ENCODE measurements at regions of chr1 and their contacts with region 1.

Region 1: DNA sequence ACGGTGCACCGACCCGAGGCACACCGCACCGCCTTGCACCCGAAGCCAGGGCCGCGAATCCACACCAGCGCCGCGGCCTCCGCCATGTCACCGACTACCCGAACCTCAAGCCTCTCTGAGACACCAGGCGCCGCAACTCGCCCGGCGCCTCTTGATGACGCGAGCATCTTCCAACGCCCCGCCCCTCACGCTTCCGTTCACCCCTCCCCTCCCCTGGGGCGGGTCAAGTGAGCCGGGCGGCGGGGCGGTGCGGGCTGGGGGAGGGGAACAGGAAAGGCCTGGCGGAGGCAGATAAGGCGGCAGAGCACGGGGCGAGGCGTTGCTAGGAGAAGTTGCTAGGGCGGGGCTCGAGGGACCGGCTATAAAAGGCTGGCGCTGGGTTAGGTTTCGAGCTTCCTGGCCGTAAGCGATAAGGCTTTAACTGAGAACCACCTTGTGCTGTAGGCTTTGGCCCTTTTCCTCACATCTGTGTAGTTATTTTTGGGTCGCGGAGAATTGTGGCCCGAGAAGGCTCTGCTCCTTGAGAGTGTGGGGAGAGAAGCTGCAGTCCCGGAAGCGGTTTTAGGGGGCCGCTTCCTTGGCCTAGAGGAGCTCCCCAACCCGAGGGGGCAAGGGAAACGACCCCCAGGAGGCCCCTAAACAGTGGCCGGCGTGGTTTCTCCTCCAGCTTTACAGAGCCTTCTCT is at the start of gene SDE2:
- DNase-seq: peak; percentile 98 to 100 (median 100)
- ATAC-seq: peak; percentile 93
- H3K4me3 ChIP-seq: peak within 1 kb of the TSS; percentile 84
- H3K4me3 Mint-ChIP-seq: peak within 1 kb of the TSS; percentile 89 to 100 (median 100)
- H3K27ac ChIP-seq: peak within 1 kb of the TSS; percentile 98
- H3K27ac Mint-ChIP-seq: peak within 1 kb of the TSS; percentile 95 to 100 (median 100)
- H3K4me1 ChIP-seq: peaks cover 51 to 71% of the 10 kb centered on the region in 2 donors
- H3K4me1 Mint-ChIP-seq: peaks cover 47 to 96% (median 79%) of the 10 kb centered on the region in 7 donors
- H3K27me3 ChIP-seq: no peaks in the 10 kb centered on the region
- H3K27me3 Mint-ChIP-seq: no peaks in the 10 kb centered on the region
- total RNA-seq, gene SDE2: 20.4 to 36.3 (median 20.8) TPM

Region 2: GRCh38 chr1:224623743-224624333 is 1375.5 kb before region 1 on chr1:
- CTCF ChIA-PET with region 1: no interaction called
- POLR2A ChIA-PET with region 1: no interaction called
- intact Hi-C with region 1: loop called in 1 of 2 experiments (anchors 10 kb)
- DNase-seq: peak in 8 of 9 donors; percentile 70 to 89 (median 83)
- ATAC-seq: peak; percentile 93
- H3K4me3 ChIP-seq: peak overlapping the region; percentile 40
- H3K4me3 Mint-ChIP-seq: peak overlapping the region; percentile 58 to 80 (median 72)
- H3K27ac ChIP-seq: no peak overlapping the region
- H3K27ac Mint-ChIP-seq: peak overlapping the region; percentile 66 to 95 (median 90)
- H3K4me1 ChIP-seq: peaks cover 18 to 25% of the 10 kb centered on the region in 2 donors
- H3K4me1 Mint-ChIP-seq: peaks cover 22 to 47% (median 31%) of the 10 kb centered on the region in 7 donors
- H3K27me3 ChIP-seq: no peaks in the 10 kb centered on the region
- H3K27me3 Mint-ChIP-seq: peaks cover 40 to 45% (median 44%) of the 10 kb centered on the region in 5 donors

Region 3: GRCh38 chr1:225228841-225229303 is 770.5 kb before region 1 on chr1:
- CTCF ChIA-PET with region 1: no interaction called
- POLR2A ChIA-PET with region 1: no interaction called
- intact Hi-C with region 1: no loop called
- DNase-seq: no peak
- ATAC-seq: no peak
- H3K4me3 ChIP-seq: no peak overlapping the region
- H3K4me3 Mint-ChIP-seq: no peak overlapping the region
- H3K27ac ChIP-seq: no peak overlapping the region
- H3K27ac Mint-ChIP-seq: no peak overlapping the region
- H3K4me1 ChIP-seq: no peaks in the 10 kb centered on the region
- H3K4me1 Mint-ChIP-seq: no peaks in the 10 kb centered on the region
- H3K27me3 ChIP-seq: no peaks in the 10 kb centered on the region
- H3K27me3 Mint-ChIP-seq: peaks cover 0 to 9% (median 0%) of the 10 kb centered on the region in 5 donors

Region 4: GRCh38 chr1:225467193-225468020 is 532.0 kb before region 1 on chr1:
- CTCF ChIA-PET with region 1: no interaction called
- POLR2A ChIA-PET with region 1: interaction called, 41 read pairs
- intact Hi-C with region 1: loop called (anchors 1 kb)
- DNase-seq: peak; percentile 57 to 85 (median 81)
- ATAC-seq: peak; percentile 91
- H3K4me3 ChIP-seq: peak overlapping the region; percentile 94
- H3K4me3 Mint-ChIP-seq: peak overlapping the region; percentile 81 to 94 (median 92)
- H3K27ac ChIP-seq: peak overlapping the region; percentile 85
- H3K27ac Mint-ChIP-seq: peak overlapping the region; percentile 89 to 98 (median 98)
- H3K4me1 ChIP-seq: peaks cover 22 to 40% of the 10 kb centered on the region in 2 donors
- H3K4me1 Mint-ChIP-seq: peaks cover 33 to 65% (median 48%) of the 10 kb centered on the region in 7 donors
- H3K27me3 ChIP-seq: no peaks in the 10 kb centered on the region
- H3K27me3 Mint-ChIP-seq: no peaks in the 10 kb centered on the region

Region 5: GRCh38 chr1:225923692-225924555 is 75.4 kb before region 1 on chr1 and contains the start of gene PYCR2:
- CTCF ChIA-PET with region 1: no interaction called
- POLR2A ChIA-PET with region 1: interaction called, 15 read pairs
- intact Hi-C with region 1: loop called (anchors 1 kb)
- DNase-seq: peak; percentile 92 to 97 (median 94)
- ATAC-seq: peak; percentile 99
- H3K4me3 ChIP-seq: peak within 1 kb of the TSS; percentile 100
- H3K4me3 Mint-ChIP-seq: peak within 1 kb of the TSS; percentile 86 to 98 (median 94)
- H3K27ac ChIP-seq: peak within 1 kb of the TSS; percentile 95
- H3K27ac Mint-ChIP-seq: peak within 1 kb of the TSS; percentile 90 to 98 (median 95)
- H3K4me1 ChIP-seq: peaks cover 11 to 65% of the 10 kb centered on the region in 2 donors
- H3K4me1 Mint-ChIP-seq: peaks cover 45 to 75% (median 60%) of the 10 kb centered on the region in 7 donors
- H3K27me3 ChIP-seq: no peaks in the 10 kb centered on the region
- H3K27me3 Mint-ChIP-seq: no peaks in the 10 kb centered on the region
- total RNA-seq, gene PYCR2: 46.4 to 137 (median 109) TPM

Region 6: GRCh38 chr1:225950905-225951497 is 48.4 kb before region 1 on chr1:
- CTCF ChIA-PET with region 1: no interaction called
- POLR2A ChIA-PET with region 1: no interaction called
- intact Hi-C with region 1: no loop called
- DNase-seq: no peak
- ATAC-seq: no peak
- H3K4me3 ChIP-seq: no peak overlapping the region
- H3K4me3 Mint-ChIP-seq: no peak overlapping the region
- H3K27ac ChIP-seq: no peak overlapping the region
- H3K27ac Mint-ChIP-seq: no peak overlapping the region
- H3K4me1 ChIP-seq: no peaks in the 10 kb centered on the region
- H3K4me1 Mint-ChIP-seq: no peaks in the 10 kb centered on the region
- H3K27me3 ChIP-seq: no peaks in the 10 kb centered on the region
- H3K27me3 Mint-ChIP-seq: peaks cover 4 to 49% (median 8%) of the 10 kb centered on the region in 5 donors

Region 7: DNA sequence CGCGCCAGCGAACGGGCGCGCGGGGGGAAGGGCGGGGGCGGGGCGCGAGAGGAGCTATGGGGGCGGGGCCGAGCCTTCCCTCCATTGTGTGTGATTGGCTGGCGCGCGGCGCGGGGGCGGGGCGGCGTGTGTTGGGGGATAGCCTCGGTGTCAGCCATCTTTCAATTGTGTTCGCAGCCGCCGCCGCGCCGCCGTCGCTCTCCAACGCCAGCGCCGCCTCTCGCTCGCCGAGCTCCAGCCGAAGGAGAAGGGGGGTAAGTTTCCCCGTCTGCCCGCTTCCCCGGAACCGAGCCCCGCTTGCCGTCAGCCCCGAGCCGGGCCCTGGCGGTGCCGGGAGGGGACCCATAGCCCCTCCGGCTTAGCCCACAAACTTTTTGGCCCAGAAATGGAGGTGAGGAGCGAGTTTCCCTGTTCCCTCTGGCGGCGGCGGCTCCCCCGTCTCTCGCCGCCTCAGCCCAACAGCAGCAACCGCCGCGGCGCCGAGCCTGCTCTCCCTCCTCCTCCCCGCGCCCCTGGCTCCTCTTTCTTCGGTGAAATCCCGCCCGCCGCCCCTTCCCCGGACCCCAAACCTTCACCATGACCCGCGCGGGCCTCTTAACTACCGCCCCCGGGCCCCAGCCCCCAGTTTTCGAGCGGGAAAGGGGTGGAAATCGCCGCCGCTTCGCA is 63.3 kb after region 1 on chr1 and contains the start of gene H3-3A:
- CTCF ChIA-PET with region 1: interaction called, 13 read pairs
- POLR2A ChIA-PET with region 1: interaction called, 450 read pairs
- intact Hi-C with region 1: loop called (anchors 1 kb)
- DNase-seq: peak; percentile 97 to 99 (median 98)
- ATAC-seq: peak; percentile 93
- H3K4me3 ChIP-seq: peak within 1 kb of the TSS; percentile 80
- H3K4me3 Mint-ChIP-seq: peak within 1 kb of the TSS; percentile 99 to 100 (median 100)
- H3K27ac ChIP-seq: peak within 1 kb of the TSS; percentile 97
- H3K27ac Mint-ChIP-seq: peak within 1 kb of the TSS; percentile 99 to 100 (median 100)
- H3K4me1 ChIP-seq: peaks cover 24 to 31% of the 10 kb centered on the region in 2 donors
- H3K4me1 Mint-ChIP-seq: peaks cover 34 to 63% (median 51%) of the 10 kb centered on the region in 7 donors
- H3K27me3 ChIP-seq: no peaks in the 10 kb centered on the region
- H3K27me3 Mint-ChIP-seq: no peaks in the 10 kb centered on the region
- total RNA-seq, gene H3-3A: 388 to 561 (median 412) TPM

Region 8: GRCh38 chr1:226121587-226122400 is 122.4 kb after region 1 on chr1:
- CTCF ChIA-PET with region 1: interaction called, 3 read pairs
- POLR2A ChIA-PET with region 1: interaction called, 27 read pairs
- intact Hi-C with region 1: loop called (anchors 1 kb)
- DNase-seq: peak; percentile 65 to 87 (median 77)
- ATAC-seq: peak; percentile 82
- H3K4me3 ChIP-seq: peak overlapping the region; percentile 28
- H3K4me3 Mint-ChIP-seq: peak overlapping the region; percentile 68 to 94 (median 82)
- H3K27ac ChIP-seq: peak overlapping the region; percentile 75
- H3K27ac Mint-ChIP-seq: peak overlapping the region in 4 of 9 donors; percentile 51 to 95 (median 77)
- H3K4me1 ChIP-seq: peaks cover 9 to 12% of the 10 kb centered on the region in 2 donors
- H3K4me1 Mint-ChIP-seq: peaks cover 15 to 40% (median 27%) of the 10 kb centered on the region in 7 donors
- H3K27me3 ChIP-seq: no peaks in the 10 kb centered on the region
- H3K27me3 Mint-ChIP-seq: peaks cover 0 to 10% (median 0%) of the 10 kb centered on the region in 5 donors

Region 9: DNA sequence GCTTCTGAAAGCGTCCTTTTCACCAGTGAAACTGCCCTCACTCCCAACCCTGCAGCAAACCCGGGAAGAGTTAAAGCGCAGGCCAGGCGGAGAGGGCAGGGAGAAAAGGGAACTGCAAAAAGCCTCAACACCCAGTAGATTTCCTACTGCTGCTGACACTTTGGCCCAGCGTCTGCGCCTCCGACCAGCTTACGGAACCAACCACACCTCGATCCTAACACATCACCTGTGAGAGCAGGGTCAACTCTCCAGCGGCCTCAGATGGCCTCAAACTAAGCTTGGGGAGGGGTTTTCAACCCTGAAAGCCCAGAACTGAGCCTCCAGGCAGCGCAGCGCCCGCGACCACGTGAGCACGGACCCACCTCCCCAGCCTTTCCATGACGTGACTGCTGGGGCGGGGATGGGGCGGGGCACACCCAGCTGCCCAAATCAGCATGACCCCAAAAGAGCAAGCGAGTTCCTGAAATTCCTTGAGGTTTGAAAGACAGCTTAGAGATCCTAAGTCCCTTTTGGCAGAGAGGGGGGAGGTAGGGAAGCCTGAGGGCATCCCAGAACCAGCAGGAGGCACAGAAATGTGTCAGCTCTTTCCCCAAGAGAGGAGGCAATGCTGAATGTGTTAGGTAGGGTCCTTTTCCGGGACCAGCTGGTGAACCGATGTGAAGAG is 680.6 kb after region 1 on chr1:
- CTCF ChIA-PET with region 1: no interaction called
- POLR2A ChIA-PET with region 1: no interaction called
- intact Hi-C with region 1: loop called in 1 of 2 experiments (anchors 5 kb)
- DNase-seq: peak; percentile 42 to 89 (median 75)
- ATAC-seq: peak; percentile 58
- H3K4me3 ChIP-seq: peak overlapping the region; percentile 40
- H3K4me3 Mint-ChIP-seq: peak overlapping the region; percentile 80 to 90 (median 82)
- H3K27ac ChIP-seq: peak overlapping the region; percentile 86
- H3K27ac Mint-ChIP-seq: peak overlapping the region; percentile 95 to 100 (median 99)
- H3K4me1 ChIP-seq: peaks cover 86 to 97% of the 10 kb centered on the region in 2 donors
- H3K4me1 Mint-ChIP-seq: peaks cover 83 to 100% (median 99%) of the 10 kb centered on the region in 7 donors
- H3K27me3 ChIP-seq: no peaks in the 10 kb centered on the region
- H3K27me3 Mint-ChIP-seq: peaks cover 0 to under 1% (median 0%) of the 10 kb centered on the region in 5 donors

Measured in naive thymus-derived CD4-positive, alpha-beta T cell (primary cell).